ENCODE measurements at regions of chr9 and their contacts with region 1.

Region 1: DNA sequence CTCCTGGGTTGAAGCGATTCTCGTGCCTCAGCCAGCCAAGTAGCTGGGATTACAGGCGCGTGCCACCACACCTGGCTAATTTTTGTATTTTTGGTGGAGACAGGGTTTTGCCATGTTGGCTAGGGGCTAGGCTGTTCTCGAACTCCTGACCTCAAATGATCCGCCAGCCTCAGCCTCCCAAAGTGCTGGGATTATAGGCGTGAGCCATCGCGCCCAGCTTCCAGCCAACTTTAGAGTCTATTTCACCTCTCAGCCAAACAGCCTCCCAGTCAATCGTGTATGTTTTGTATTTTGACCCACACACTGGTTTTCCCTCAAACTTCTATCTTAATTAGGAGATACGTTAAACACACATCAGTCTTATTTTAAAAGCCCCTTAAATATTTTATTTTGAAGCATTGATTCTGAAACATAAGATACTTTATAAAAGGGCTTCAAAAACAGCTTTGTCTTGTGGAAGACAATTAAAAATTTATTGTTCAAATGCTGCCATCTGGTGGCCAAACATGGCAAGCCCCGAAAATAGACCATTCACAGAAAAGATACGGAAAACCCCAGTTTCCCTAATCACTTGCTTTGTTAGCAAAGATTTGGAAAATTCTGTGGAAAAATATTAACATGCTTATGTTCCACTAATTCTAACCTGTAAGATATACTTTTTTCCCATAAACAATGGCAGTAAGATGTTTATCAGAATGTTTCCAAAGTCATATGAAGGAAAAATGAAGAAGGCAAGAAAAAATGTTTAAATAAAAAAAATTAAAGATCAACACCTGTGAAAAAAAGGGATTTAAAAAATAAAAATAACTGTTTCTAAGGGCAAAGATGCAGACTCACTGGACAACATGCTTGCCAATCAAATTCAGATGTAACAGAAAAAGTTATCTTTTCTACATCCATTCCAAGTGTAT is 33.1 kb downstream of the APTX start:
- DNase-seq: peak; percentile 75
- ATAC-seq: no peak
- H3K4me3 Mint-ChIP-seq: no peak overlapping the region
- H3K27ac Mint-ChIP-seq: no peak overlapping the region
- H3K4me1 Mint-ChIP-seq: peaks cover 1% of the 10 kb centered on the region
- H3K27me3 Mint-ChIP-seq: no peaks in the 10 kb centered on the region
- CTCF ChIP-seq: peak; percentile 84

Region 2: GRCh38 chr9:32589083-32589723 is 379.2 kb before region 1 on chr9:
- CTCF ChIA-PET with region 1: interaction called, 25 read pairs
- POLR2A ChIA-PET with region 1: no interaction called
- intact Hi-C with region 1: no loop called
- DNase-seq: no peak
- ATAC-seq: peak; percentile 47
- H3K4me3 Mint-ChIP-seq: no peak overlapping the region
- H3K27ac Mint-ChIP-seq: no peak overlapping the region
- H3K4me1 Mint-ChIP-seq: no peaks in the 10 kb centered on the region
- H3K27me3 Mint-ChIP-seq: peaks cover 19% of the 10 kb centered on the region
- CTCF ChIP-seq: no peak